ENCODE measurements at regions of chrX and their contacts with region 1.

Region 1: DNA sequence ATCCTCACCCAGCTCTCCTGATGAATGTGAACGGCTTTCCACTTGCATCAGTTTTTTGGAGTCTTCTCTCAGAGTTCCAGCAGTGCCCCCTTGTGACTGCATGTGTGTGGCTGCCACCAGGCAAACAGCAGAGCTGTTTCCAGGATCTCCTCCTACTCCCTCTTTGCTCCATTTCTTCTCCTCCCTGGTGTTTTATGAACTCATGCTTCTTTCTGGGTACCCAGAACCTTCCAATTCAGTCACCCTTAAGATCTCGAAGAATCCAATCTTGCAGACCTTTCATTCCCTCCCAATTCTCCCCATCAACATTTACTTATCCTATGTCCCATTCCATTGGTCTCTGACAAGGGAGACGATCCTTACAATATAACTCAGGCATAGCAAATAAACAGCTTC is 6.8 kb upstream of the TCEANC start:
- DNase-seq: peak; percentile 57
- ATAC-seq: peak; percentile 72

Region 2: GRCh38 chrX:13506574-13506973 is 139.6 kb before region 1 on chrX:
- intact Hi-C with region 1: loop called (anchors 10 kb)
- DNase-seq: peak; percentile 39
- ATAC-seq: no peak

Region 3: GRCh38 chrX:13699183-13699826 is 53.2 kb after region 1 on chrX:
- intact Hi-C with region 1: no loop called
- DNase-seq: no peak
- ATAC-seq: peak; percentile 78

Region 4: GRCh38 chrX:13825178-13825762 is 179.1 kb after region 1 on chrX:
- intact Hi-C with region 1: no loop called
- DNase-seq: no peak
- ATAC-seq: peak; percentile 26

Measured in left ventricle myocardium superior (tissue), 1 donor.